ENCODE measurements at regions of chr15 and their contacts with region 1.

Region 1: GRCh38 chr15:89408372-89409183 is 74.0 kb upstream of the POLG start:
- DNase-seq: no peak
- ATAC-seq: no peak

Region 2: DNA sequence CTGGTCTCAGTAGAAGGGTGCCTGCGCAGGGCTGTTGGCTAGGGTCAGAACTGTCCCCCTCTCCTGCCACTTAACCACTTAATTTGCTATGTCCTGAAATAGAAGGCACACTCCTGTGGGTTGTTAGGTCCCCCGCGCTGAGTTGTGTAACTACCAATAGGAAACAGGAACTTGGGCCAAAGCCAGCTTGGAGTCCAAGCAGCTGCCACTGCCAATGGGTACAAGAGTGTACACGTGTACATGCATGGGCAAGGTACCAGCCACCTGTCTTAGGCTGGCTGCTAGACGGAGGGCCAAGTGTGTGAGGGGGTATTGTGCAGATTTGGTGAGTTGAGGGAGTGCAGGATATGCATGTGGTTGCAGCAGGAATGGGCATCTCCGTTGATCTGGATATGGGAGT is 44.2 kb before region 1 on chr15:
- intact Hi-C with region 1: loop called in 1 of 2 experiments (anchors 1 kb)
- DNase-seq: no peak
- ATAC-seq: no peak

Region 3: DNA sequence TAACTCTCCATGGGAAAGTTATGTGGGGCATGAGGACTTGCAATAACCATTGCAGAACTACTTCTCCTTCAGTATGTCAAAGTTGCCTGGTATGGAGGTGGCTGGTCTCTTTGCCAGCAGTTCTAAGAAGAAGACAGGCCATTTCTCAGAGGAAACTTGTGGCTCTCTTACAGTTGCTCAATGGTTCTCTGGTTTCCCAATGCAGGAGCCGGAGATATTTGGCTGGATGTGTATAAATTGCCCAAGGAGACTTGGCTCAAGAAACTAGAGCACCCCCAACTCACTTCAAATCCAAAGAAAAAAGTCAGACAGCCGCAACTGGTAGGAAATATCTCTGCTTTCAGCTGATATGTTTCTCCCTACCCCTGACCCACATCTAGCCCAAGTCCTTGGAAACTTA is 306.2 kb after region 1 on chr15:
- intact Hi-C with region 1: no loop called
- DNase-seq: no peak
- ATAC-seq: peak in 1 of 2 donors; percentile 84

Measured in left cardiac atrium (tissue), 4 donors.